ENCODE measurements at regions of chr19 and their contacts with region 1.

Region 1: DNA sequence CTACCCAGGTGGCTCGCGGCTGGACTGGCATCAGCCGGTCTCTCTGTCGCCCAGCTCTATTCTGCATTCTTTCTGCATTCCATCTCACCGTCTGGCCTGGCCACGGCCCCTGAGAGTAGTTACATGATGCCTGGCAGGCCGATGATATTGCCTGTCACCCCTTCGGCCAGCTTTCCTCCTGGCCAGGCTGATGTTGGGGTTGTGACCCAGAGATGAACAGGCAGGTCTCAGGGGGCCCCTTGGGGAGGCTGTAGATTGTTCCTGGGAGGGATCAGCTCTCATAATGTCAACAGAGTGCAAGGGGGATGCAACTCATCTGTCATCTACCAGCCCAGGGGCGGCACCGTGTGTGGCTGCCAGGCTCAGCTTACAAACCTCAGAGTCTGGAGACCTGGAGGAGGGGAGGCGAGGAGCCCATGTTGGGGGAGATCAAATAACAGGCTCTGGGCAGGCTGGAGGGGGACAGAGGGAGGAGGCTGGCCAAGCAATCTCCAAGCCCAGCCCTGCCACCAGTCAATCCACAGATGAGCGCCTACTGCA is 13.6 kb upstream of the FBXO17 start:
- DNase-seq: no peak
- H3K4me3 ChIP-seq: no peak overlapping the region
- H3K27ac ChIP-seq: no peak overlapping the region
- H3K4me1 ChIP-seq: peaks cover 25% of the 10 kb centered on the region
- H3K27me3 ChIP-seq: no peaks in the 10 kb centered on the region
- CTCF ChIP-seq: no peak

Region 2: GRCh38 chr19:39078436-39079200 is 89.5 kb after region 1 on chr19:
- CTCF ChIA-PET with region 1: interaction called, 18 read pairs
- dilution Hi-C with region 1: no loop called
- in situ Hi-C with region 1: no loop called
- intact Hi-C with region 1: no loop called
- DNase-seq: peak; percentile 98
- H3K4me3 ChIP-seq: no peak overlapping the region
- H3K27ac ChIP-seq: peak overlapping the region; percentile 87
- H3K4me1 ChIP-seq: peaks cover 40% of the 10 kb centered on the region
- H3K27me3 ChIP-seq: no peaks in the 10 kb centered on the region
- CTCF ChIP-seq: no peak

Region 3: GRCh38 chr19:39310558-39311311 is 321.6 kb after region 1 on chr19:
- CTCF ChIA-PET with region 1: no interaction called
- dilution Hi-C with region 1: loop called (anchors 5 kb)
- in situ Hi-C with region 1: no loop called
- intact Hi-C with region 1: no loop called
- DNase-seq: no peak
- H3K4me3 ChIP-seq: no peak overlapping the region
- H3K27ac ChIP-seq: no peak overlapping the region
- H3K4me1 ChIP-seq: no peaks in the 10 kb centered on the region
- H3K27me3 ChIP-seq: peaks cover 17% of the 10 kb centered on the region
- CTCF ChIP-seq: no peak